Mammary epithelial cell (primary cell): ENCODE measurements at regions of chr2 and their contacts with region 1.

Region 1: GRCh38 chr2:17851731-17852585 is 26.5 kb upstream of the KCNS3 start:
- DNase-seq: peak; percentile 58
- H3K4me3 ChIP-seq: no peak overlapping the region
- H3K27ac ChIP-seq: no peak overlapping the region
- H3K4me1 ChIP-seq: no peaks in the 10 kb centered on the region
- H3K27me3 ChIP-seq: no peaks in the 10 kb centered on the region
- CTCF ChIP-seq: peak; percentile 90 to 91

Region 2: DNA sequence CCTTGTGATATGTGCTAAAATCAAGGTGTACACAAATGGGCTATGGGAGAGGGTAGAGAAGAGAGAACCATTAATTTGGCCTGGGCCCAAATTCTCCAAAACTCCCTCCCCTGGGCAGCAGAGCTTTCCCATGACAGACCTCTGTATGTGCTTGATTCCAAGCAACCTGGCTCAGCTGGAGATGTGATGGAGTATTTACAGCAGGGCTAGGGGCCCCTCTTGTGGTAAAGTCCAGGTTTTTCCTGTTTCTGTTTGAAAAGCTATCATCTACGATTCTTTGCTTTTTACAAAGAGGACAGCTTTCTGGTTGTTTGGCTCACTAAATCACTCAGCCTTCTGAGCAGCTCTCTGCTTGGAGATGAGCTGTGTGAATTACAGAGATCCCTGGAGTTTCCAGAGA is 66.8 kb after region 1 on chr2:
- CTCF ChIA-PET with region 1: no interaction called
- dilution Hi-C with region 1: no loop called
- in situ Hi-C with region 1: no loop called
- intact Hi-C with region 1: loop called (anchors 1 kb)
- DNase-seq: no peak
- H3K4me3 ChIP-seq: no peak overlapping the region
- H3K27ac ChIP-seq: no peak overlapping the region
- H3K4me1 ChIP-seq: no peaks in the 10 kb centered on the region
- H3K27me3 ChIP-seq: no peaks in the 10 kb centered on the region
- CTCF ChIP-seq: peak in 1 of 2 donors; percentile 22

Region 3: DNA sequence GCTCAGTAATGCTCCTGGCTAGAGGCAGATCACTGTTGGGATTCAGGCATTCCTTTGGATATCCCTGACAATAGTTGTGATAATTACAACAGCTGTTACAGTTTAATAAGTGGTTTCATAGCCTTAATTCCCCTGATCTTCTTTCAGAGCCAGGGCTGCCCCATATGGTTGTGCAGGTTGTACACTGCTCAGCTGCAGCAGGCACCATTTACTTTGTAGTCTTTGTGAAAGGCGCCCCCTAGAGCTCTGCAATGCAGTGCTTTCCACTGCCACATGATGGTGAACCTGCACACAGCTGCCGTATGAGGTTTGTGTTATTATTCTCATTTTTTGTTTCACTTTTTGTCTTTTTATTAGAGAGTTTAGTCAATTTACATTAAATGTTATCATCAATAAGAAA is 265.6 kb after region 1 on chr2:
- CTCF ChIA-PET with region 1: no interaction called
- dilution Hi-C with region 1: no loop called
- in situ Hi-C with region 1: loop called in 1 of 2 experiments (anchors 5 kb)
- intact Hi-C with region 1: loop called (anchors 1 kb)
- DNase-seq: peak; percentile 43
- H3K4me3 ChIP-seq: no peak overlapping the region
- H3K27ac ChIP-seq: no peak overlapping the region
- H3K4me1 ChIP-seq: no peaks in the 10 kb centered on the region
- H3K27me3 ChIP-seq: no peaks in the 10 kb centered on the region
- CTCF ChIP-seq: peak; percentile 81 to 93

Region 4: GRCh38 chr2:18149645-18150246 is 297.8 kb after region 1 on chr2:
- CTCF ChIA-PET with region 1: interaction called, 3 read pairs
- dilution Hi-C with region 1: loop called (anchors 25 kb)
- in situ Hi-C with region 1: no loop called
- intact Hi-C with region 1: loop called (anchors 1 kb)
- DNase-seq: peak; percentile 24
- H3K4me3 ChIP-seq: no peak overlapping the region
- H3K27ac ChIP-seq: no peak overlapping the region
- H3K4me1 ChIP-seq: no peaks in the 10 kb centered on the region
- H3K27me3 ChIP-seq: no peaks in the 10 kb centered on the region
- CTCF ChIP-seq: peak; percentile 82 to 84

Region 5: DNA sequence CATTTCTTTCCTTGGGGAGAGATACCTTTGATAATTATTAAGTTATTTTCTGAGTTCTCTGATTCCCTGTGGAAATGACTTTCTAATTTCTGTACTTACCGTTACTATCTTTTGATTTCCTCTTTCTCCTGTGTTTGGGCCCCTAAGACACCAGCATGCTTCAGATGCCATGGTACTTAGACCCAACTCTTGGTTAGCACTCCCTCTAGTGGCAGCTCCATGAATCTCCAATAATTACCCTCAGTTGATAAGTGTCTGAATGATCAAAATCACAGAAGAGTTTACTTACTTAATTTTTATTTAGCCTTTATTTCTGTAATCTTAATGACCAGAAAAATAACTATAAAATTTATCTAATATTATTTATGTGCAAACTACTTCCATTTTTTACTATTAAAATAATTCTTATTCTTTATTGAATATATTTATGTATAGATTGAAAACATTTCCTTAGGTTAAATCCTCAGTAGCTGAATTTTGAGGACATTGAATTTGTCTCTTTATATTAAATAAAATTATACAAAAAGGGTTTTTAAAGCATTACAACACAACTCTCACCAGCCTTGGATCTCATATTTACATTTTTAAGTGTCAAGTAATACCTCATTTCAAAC is 326.9 kb after region 1 on chr2:
- CTCF ChIA-PET with region 1: no interaction called
- dilution Hi-C with region 1: no loop called
- in situ Hi-C with region 1: no loop called
- intact Hi-C with region 1: loop called (anchors 1 kb)
- DNase-seq: peak; percentile 26
- H3K4me3 ChIP-seq: no peak overlapping the region
- H3K27ac ChIP-seq: no peak overlapping the region
- H3K4me1 ChIP-seq: no peaks in the 10 kb centered on the region
- H3K27me3 ChIP-seq: no peaks in the 10 kb centered on the region
- CTCF ChIP-seq: peak; percentile 84 to 86

Region 6: DNA sequence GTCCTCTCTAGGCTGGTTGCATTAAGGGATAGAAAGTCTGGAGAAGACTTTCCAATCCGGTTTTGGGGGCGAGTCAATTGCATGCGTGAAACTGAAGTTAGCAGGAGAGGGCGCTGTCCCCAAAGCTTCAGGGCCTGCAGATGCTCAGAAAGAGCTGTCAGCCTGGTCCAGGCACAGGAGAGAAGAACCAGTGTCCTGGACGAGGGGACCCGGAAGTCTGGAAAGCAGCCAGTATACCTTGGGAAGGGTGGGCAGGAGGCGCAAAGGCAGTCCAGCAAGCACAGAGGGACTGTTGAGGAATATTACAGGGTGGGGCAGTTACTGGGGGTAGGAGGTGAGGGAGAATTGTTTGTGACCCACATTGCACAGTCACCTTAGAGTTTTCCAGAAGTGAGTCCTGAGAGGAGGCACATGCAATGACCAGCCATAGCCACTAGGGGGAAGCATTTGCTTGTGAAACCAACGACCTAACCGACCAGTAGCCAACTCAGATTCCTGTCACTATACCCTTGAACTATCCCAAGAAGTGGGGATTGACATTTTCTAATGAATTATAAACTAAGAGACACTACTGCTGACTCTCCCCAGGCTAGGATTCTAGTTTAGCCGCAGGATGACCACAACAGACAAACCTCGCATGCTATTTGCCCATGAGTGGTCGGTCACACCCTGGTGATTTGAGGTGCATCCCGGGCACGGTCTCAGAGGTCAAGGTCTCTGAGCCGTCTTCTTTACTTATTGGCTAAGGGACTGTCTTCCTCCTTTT is 535.7 kb after region 1 on chr2:
- CTCF ChIA-PET with region 1: no interaction called
- dilution Hi-C with region 1: no loop called
- in situ Hi-C with region 1: loop called in 1 of 2 experiments (anchors 10 kb)
- intact Hi-C with region 1: no loop called
- DNase-seq: peak; percentile 51
- H3K4me3 ChIP-seq: no peak overlapping the region
- H3K27ac ChIP-seq: no peak overlapping the region
- H3K4me1 ChIP-seq: no peaks in the 10 kb centered on the region
- H3K27me3 ChIP-seq: no peaks in the 10 kb centered on the region
- CTCF ChIP-seq: peak; percentile 93 to 95